A549 (cell line): ENCODE measurements at regions of chr2 and their contacts with region 1.

Region 1: DNA sequence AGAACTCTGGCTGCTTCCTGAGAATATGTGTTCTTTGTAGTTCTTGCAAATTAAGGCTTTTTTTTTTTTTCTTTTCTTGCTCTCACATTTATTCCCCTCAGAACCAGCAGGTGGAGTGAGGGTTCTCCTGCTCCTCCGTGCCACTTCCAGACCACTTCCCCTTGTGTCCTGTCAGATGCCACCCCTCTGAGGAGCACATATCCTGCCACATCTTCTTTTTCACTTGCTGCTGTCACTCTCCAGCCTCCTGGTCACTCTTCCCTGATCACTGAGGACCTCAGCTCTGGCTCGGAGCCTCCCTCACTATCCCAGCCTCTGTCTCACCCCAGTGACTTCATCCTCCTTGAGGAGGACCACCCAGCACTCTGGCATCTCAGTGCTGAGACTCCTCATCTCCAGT is 100.5 kb downstream of the TACR1 start:
- DNase-seq: peak; percentile 13 to 63
- ATAC-seq: peak; percentile 70 to 87; a peak in 4 of 6 replicates
- H3K4me3 ChIP-seq: no peak overlapping the region
- H3K27ac ChIP-seq: no peak overlapping the region
- H3K4me1 ChIP-seq: peaks cover 16% of the 10 kb centered on the region
- CTCF ChIP-seq: peak; percentile 53
- EP300 ChIP-seq: no peak
- POLR2A ChIP-seq: no peak
- RAD21 ChIP-seq: peak; percentile 56 to 68

Region 2: DNA sequence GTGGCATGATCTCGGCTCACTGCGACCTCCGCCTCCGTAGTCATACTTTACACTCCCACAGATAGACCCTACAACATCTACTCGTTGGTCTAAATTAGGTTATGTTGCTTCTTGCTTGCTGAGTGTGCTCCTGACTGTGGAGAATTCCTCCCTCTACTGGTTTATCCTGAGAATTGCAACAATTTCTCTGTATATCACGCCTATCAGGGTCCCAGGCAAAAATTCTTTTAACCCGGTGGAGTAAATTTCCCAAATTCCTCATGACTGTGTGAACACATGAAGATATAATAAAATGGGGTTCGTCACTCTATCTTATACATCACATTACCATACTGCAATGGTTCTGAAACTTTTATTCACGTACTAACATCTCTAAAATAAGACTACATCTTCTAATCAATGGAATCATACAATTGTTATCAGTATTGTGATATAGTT is 305.2 kb after region 1 on chr2:
- CTCF ChIA-PET with region 1: interaction called, 13 read pairs
- POLR2A ChIA-PET with region 1: no interaction called
- DNase-seq: peak; percentile 17 to 65
- ATAC-seq: peak; percentile 98 to 99
- H3K4me3 ChIP-seq: no peak overlapping the region
- H3K27ac ChIP-seq: no peak overlapping the region
- H3K4me1 ChIP-seq: no peaks in the 10 kb centered on the region
- CTCF ChIP-seq: peak; percentile 97
- EP300 ChIP-seq: no peak
- POLR2A ChIP-seq: no peak
- RAD21 ChIP-seq: peak; percentile 93 to 96